ENCODE measurements at regions of chr4 and their contacts with region 1.

Region 1: GRCh38 chr4:165464813-165465381 is 86.1 kb downstream of the CPE start:
- DNase-seq: no peak

Region 2: DNA sequence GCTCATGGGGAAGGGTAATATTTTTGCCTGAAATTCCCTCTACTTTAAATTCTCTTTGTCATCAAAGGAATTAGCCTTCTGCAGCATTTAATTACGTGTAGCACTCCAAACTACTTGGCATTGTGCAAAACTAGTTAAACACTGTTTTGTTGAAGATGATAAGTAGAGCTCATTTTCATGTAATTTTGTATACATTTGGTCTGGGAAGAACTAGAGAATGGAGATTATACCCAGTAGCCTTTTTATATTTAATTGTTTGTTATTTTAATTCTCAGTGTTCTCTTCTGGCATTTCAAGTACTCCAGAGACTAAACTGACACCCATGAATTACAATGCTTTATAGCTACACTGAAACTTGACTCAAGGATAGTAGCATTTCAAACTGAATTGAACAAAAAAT is 922.5 kb before region 1 on chr4:
- intact Hi-C with region 1: no loop called
- DNase-seq: no peak

Region 3: DNA sequence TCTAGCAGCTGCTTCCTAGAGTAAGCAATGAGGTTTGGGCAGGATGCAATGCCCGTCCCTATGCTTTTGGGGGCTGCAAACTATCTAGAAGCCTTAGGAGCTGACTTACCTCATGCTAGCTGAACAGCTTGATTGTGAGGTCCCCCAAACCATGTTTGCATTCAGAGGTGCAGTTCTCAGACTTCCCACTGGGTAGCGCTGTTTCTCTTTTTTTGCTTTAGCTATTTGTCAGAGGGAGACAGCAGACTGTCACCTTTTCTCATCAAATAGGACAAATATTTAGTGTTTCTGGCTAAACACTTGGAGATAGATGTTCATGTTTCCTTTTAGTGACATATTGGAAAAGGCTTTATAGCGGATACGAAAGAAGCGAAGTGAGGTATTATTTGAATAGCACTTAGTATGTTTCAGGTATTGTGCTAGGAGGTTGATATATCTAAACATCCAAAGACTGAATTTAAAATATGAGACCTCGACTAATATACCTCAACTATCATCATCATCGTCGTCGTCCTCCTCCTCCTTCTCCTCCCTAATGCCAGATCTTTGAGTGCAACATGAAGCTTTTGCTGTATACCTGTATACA is 333.6 kb before region 1 on chr4:
- intact Hi-C with region 1: loop called (anchors 5 to 10 kb)
- DNase-seq: no peak

Region 4: GRCh38 chr4:165355900-165356300 is 109.0 kb before region 1 on chr4:
- intact Hi-C with region 1: loop called (anchors 5 kb)
- DNase-seq: no peak

Region 5: GRCh38 chr4:165378745-165379677 is 85.9 kb before region 1 on chr4 and contains the start of gene CPE:
- intact Hi-C with region 1: loop called in 1 of 2 experiments (anchors 5 kb)
- DNase-seq: peak; percentile 95
- total RNA-seq, gene CPE: 334 to 383 TPM